ENCODE measurements at regions of chr15 and their contacts with region 1.

Region 1: DNA sequence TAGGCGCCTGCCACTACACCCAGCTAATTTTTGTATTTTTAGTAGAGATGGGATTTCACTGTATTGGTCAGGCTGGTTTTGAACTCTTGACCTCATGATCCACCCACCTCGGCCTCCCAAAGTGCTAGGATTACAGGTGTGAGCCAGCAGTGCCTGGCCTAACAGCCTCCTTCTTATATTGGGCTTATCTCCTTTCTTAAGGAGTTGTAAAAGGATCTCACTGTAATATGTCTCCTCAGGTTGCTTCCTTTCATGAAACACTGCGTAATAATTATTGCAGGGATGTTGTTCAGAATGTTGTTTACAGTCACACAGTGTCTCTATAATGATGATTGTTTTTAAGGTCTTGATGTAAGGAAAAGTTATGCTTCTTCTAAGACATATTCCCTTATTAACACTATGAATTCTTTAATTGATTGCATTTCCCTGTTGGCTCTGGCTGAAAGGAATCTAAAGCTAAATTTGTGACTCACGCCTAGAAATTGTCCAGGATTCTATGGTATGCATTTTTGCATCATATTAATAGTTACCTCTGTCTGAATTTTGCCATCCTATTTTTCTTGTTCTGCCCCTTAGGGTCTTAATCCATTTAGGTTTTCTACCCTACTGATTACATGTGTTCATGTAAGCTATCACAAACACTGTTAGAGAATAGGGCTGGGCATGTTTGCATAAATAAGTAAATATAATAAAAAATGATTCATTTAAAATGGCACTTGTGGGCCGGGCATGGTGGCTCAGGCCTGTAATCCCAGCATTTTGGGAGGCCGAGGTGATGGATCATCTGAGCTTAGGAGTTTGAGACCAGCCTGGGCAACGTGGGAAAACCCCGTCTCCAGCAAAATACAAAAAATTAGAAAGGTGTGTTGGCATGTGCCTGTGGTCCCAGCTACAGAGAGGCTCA is 24.5 kb upstream of the RNF111 start:
- DNase-seq: no peak
- ATAC-seq: no peak
- H3K4me3 ChIP-seq: no peak overlapping the region
- H3K27ac ChIP-seq: no peak overlapping the region
- H3K4me1 ChIP-seq: no peaks in the 10 kb centered on the region
- H3K27me3 ChIP-seq: no peaks in the 10 kb centered on the region
- CTCF ChIP-seq: no peak
- POLR2A ChIP-seq: no peak

Region 2: DNA sequence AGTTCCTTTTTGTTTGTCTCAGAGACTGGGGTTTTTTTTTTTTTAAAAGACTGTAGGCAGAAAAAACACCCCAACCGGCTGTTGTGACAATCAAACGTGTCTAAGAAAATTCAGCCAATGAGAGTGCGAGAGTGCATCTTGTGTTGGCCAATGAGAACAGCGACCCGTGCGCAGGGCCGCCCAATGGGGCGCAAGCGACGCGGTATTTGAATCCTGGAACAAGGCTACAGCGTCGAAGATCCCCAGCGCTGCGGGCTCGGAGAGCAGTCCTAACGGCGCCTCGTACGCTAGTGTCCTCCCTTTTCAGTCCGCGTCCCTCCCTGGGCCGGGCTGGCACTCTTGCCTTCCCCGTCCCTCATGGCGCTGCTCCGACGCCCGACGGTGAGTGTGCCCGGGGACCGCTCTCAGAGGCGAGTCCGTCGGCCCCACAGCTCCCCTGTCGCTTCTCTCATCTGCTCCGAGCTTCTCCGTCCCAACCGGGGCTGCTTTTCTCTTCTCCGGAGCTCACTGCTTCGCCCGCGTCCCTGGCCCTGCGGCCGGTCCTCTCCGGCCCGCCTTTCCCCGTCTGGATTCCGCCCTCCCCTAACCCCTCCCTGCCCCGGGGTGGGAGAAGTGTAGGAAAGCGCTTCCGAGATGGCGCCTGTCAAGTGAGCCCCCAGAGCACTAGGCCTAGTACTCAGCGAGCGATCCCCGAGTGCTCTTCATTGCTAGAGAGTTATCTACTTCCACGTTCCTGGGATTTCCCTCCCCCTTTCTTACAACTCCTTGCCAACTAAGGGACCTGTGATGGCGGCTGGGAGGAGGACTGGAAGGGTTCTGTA is 142.2 kb after region 1 on chr15 and contains the start of gene CCNB2:
- intact Hi-C with region 1: no loop called
- DNase-seq: peak; percentile 83 to 89 (median 86)
- ATAC-seq: peak; percentile 99 to 100 (median 100)
- H3K4me3 ChIP-seq: peak within 1 kb of the TSS; percentile 21 to 79 (median 64)
- H3K27ac ChIP-seq: peak within 1 kb of the TSS in 1 of 12 donors; percentile 69
- H3K4me1 ChIP-seq: peaks cover 0 to 14% (median 5%) of the 10 kb centered on the region in 12 donors
- H3K27me3 ChIP-seq: no peaks in the 10 kb centered on the region
- CTCF ChIP-seq: no peak
- POLR2A ChIP-seq: peak in 1 of 2 donors; percentile 13
- total RNA-seq, gene CCNB2: 0.25 to 6.3 (median 0.66) TPM in 7 of 9 donors, not detected in the others

Region 3: DNA sequence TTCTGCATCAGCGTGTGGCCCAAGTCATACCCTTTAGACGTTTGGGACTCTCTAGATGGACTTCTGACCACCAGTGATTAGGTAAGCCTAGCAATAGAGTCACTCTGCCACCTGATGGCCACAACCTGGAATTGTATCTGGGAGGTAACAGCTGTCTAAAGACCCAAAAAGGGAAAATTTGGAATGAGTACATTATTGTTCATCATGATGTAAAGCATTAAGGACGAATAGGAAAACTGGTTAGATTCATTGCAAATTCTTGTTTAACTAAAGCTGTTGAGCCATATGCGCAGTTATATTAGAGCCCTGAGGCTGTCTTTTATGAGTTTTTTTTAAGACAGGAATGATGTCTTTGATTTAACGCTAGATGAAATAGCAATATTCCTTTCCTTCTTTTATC is 538.7 kb after region 1 on chr15:
- intact Hi-C with region 1: loop called in 1 of 10 experiments (anchors 5 kb)
- DNase-seq: no peak
- ATAC-seq: no peak
- H3K4me3 ChIP-seq: no peak overlapping the region
- H3K27ac ChIP-seq: no peak overlapping the region
- H3K4me1 ChIP-seq: no peaks in the 10 kb centered on the region
- H3K27me3 ChIP-seq: no peaks in the 10 kb centered on the region
- CTCF ChIP-seq: peak; percentile 35 to 64 (median 50)
- POLR2A ChIP-seq: no peak

Measured in heart left ventricle (tissue), 16 donors.